Heart right ventricle (tissue), 16 donors: ENCODE measurements at regions of chr4 and their contacts with region 1.

Region 1: DNA sequence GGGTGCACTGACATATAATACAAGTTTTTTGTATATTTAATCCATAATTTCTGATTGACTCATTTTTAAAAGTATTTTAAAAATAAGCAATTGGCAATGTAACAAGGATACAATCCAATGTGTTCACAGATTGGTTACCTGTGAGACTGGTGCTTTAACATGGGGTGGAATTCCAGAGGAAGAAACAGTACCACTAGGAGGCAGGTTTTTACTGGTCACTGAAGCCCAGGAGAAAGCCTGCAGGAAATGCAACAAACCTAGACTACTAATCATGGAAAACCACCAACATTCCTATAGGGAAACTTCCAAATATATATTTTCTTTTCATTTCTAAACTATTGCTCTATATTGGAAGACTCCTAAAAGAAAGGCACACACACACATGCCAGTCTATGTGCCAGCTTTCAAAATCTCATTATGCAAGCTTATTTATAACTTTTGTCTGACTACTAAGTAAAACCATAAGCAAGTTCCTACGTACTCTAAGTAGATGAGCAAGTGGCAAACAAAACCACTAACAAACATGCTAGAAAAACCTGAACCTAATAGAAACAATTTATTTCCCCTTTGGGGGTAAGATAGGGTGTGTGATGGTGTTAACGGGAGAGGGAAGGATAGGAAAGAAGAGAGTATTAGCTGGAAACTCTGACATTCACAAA is 19.2 kb downstream of the G3BP2 start:
- DNase-seq: no peak
- ATAC-seq: peak in 4 of 8 donors; percentile 51 to 61 (median 54)
- H3K4me3 ChIP-seq: no peak overlapping the region
- H3K27ac ChIP-seq: no peak overlapping the region
- H3K4me1 ChIP-seq: peaks cover 0 to 6% (median 0%) of the 10 kb centered on the region in 9 donors
- H3K27me3 ChIP-seq: no peaks in the 10 kb centered on the region
- CTCF ChIP-seq: peak; percentile 18 to 65 (median 47)

Region 2: GRCh38 chr4:75844151-75844662 is 190.2 kb after region 1 on chr4:
- intact Hi-C with region 1: loop called in 1 of 10 experiments (anchors 10 kb)
- DNase-seq: no peak
- ATAC-seq: peak in 2 of 8 donors; percentile 32 to 43
- H3K4me3 ChIP-seq: no peak overlapping the region
- H3K27ac ChIP-seq: no peak overlapping the region
- H3K4me1 ChIP-seq: peaks cover 0 to 24% (median 10%) of the 10 kb centered on the region in 9 donors
- H3K27me3 ChIP-seq: peaks cover 0 to 9% (median 0%) of the 10 kb centered on the region in 7 donors
- CTCF ChIP-seq: no peak